Endothelial cell of umbilical vein (primary cell): ENCODE measurements at regions of chr1 and their contacts with region 1.

Region 1: DNA sequence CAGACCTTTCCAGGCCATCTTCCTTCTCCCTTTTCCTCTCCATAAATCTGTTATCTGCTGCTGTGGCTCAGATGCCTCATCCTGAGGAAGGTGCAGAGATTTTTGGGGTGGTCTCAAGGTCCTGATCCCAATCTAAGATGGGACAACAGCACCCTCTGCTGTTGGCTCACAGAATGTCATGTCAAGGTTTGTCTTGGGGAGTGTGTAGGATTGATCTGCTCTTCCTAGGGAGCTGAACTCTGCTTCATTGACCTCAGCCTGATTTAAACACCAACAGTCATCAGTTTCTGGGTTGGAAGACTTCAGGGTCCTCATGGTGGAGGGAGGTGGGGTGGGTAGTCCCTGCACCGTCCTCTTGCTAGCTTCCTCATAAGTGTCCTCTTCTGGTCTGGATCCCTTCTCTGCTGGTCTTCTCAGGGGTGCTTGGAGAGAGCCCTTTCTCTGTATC is 62.8 kb upstream of the LAX1 start:
- DNase-seq: peak; percentile 62
- H3K4me3 ChIP-seq: no peak overlapping the region
- H3K27ac ChIP-seq: no peak overlapping the region
- H3K4me1 ChIP-seq: no peaks in the 10 kb centered on the region
- H3K27me3 ChIP-seq: no peaks in the 10 kb centered on the region
- CTCF ChIP-seq: peak; percentile 71 to 82
- POLR2A ChIP-seq: no peak

Region 2: DNA sequence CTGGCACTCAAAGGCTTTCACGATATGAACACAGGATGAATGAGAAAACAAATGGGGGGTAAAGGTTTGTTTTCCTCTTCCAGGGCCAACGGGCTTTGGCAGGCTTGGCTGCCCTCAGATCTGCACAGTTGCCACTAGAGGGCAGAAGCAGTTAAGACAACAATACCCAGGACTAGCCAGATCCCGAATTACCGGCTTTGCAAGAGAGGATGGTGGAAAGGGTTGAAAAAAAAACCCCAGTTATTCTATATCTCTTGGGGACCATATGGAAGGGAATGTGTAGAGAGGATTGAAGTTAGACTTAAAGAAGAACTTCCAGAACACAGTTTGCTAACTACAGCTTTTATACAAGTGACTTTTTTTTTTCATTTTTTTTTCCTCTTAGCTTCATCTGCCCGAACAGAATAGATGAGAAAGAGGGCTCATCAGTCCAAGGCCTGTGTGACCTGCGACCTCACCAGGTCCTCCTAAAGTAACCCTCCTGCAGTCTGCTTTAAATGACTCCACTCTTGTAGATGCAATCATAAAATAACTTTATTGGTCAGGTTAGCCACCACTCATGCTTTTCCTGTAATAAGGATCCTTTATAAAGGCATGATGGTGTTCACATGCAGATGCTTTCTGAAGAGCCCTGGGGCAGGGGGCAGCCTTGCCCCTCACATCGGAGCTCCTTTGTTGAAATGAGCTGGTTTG is 361.9 kb before region 1 on chr1:
- CTCF ChIA-PET with region 1: interaction called, 27 read pairs
- POLR2A ChIA-PET with region 1: no interaction called
- dilution Hi-C with region 1: no loop called
- intact Hi-C with region 1: loop called (anchors 1 kb)
- DNase-seq: peak; percentile 76
- H3K4me3 ChIP-seq: no peak overlapping the region
- H3K27ac ChIP-seq: no peak overlapping the region
- H3K4me1 ChIP-seq: no peaks in the 10 kb centered on the region
- H3K27me3 ChIP-seq: peaks cover 33 to 42% of the 10 kb centered on the region in 2 experiments
- CTCF ChIP-seq: peak; percentile 82 to 89
- POLR2A ChIP-seq: no peak

Region 3: DNA sequence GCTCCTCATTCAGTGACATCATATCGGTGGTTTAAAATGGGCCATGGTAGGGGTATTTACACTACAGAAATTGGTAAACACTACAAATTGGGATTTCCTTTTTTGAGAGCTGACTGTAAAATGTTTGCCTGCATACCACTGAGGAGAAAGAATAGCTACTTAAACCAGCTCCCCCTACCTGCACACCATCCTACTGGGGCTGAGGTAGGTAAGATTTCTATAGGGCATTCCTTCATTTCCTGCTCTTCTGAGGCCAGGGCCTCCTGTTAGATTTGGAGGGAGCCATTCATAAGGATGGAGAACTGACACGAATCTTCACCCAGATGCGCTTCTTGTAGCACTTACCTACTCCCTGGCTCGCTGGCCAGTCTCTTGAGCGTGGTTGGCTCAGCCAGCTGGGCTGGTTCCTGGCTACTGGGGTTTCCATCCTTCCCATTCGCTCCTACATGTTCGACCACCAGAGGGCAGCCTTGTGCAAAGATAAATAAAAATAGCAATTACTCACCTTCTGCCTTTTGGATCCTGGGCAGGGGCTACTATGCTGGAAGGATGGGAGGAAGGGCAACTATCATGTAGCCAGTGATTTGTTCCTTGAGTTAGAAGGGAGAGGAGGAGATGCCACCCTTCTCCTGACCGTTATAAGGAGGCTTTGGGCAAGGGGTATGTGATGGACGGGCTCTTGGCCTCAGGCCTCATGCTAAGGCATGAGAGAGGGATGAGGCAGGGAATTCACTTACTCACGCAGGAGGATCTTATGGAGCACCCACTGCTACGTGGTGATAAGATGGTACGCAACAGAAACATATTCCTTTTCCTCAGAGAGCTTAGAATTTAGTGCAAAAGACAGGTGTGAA is 197.5 kb before region 1 on chr1:
- CTCF ChIA-PET with region 1: interaction called, 161 read pairs
- POLR2A ChIA-PET with region 1: interaction called, 3 read pairs
- dilution Hi-C with region 1: no loop called
- intact Hi-C with region 1: loop called (anchors 1 kb)
- DNase-seq: peak; percentile 73
- H3K4me3 ChIP-seq: no peak overlapping the region
- H3K27ac ChIP-seq: no peak overlapping the region
- H3K4me1 ChIP-seq: peaks cover 4% of the 10 kb centered on the region
- H3K27me3 ChIP-seq: peaks cover 0 to 3% of the 10 kb centered on the region in 2 experiments
- CTCF ChIP-seq: peak; percentile 70 to 75
- POLR2A ChIP-seq: no peak

Region 4: GRCh38 chr1:203593723-203594122 is 108.4 kb before region 1 on chr1:
- CTCF ChIA-PET with region 1: interaction called, 25 read pairs
- POLR2A ChIA-PET with region 1: no interaction called
- dilution Hi-C with region 1: no loop called
- intact Hi-C with region 1: loop called (anchors 5 kb)
- DNase-seq: no peak
- H3K4me3 ChIP-seq: no peak overlapping the region
- H3K27ac ChIP-seq: no peak overlapping the region
- H3K4me1 ChIP-seq: peaks cover 4% of the 10 kb centered on the region
- H3K27me3 ChIP-seq: peaks cover 0 to 4% of the 10 kb centered on the region in 2 experiments
- CTCF ChIP-seq: peak; percentile 10 to 13
- POLR2A ChIP-seq: no peak

Region 5: DNA sequence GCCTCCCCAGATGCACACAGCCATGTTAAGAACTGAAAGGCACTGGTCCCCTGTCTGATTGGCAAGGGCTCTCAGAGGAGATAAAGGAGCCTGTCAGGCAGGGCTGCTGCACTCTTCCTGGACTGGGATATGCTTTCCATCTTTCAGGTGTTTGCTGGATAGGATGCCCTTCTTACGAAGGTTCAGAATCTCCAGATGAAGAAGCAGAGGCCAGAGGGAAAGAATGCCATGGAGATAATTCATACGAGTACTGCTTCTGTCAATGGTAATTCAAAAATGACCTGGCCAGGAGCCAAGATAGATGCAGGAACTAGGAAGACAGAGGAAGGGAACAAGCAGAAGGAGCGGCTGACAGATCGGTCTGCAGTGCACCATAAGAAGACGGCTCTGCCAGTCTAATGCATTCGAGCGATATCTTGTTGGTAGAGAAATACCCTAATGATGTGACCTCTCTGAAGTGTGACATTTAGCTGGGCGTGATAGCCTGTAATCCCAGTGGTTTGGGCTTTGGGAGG is 92.1 kb before region 1 on chr1:
- CTCF ChIA-PET with region 1: interaction called, 33 read pairs
- POLR2A ChIA-PET with region 1: no interaction called
- dilution Hi-C with region 1: no loop called
- intact Hi-C with region 1: loop called (anchors 5 kb)
- DNase-seq: no peak
- H3K4me3 ChIP-seq: no peak overlapping the region
- H3K27ac ChIP-seq: no peak overlapping the region
- H3K4me1 ChIP-seq: peaks cover 15% of the 10 kb centered on the region
- H3K27me3 ChIP-seq: no peaks in the 10 kb centered on the region
- CTCF ChIP-seq: no peak
- POLR2A ChIP-seq: no peak

Region 6: GRCh38 chr1:203638950-203639349 is 63.2 kb before region 1 on chr1:
- CTCF ChIA-PET with region 1: interaction called, 18 read pairs
- POLR2A ChIA-PET with region 1: no interaction called
- dilution Hi-C with region 1: no loop called
- intact Hi-C with region 1: no loop called
- DNase-seq: peak; percentile 65
- H3K4me3 ChIP-seq: no peak overlapping the region
- H3K27ac ChIP-seq: no peak overlapping the region
- H3K4me1 ChIP-seq: peaks cover 27% of the 10 kb centered on the region
- H3K27me3 ChIP-seq: no peaks in the 10 kb centered on the region
- CTCF ChIP-seq: no peak
- POLR2A ChIP-seq: no peak

Region 7: DNA sequence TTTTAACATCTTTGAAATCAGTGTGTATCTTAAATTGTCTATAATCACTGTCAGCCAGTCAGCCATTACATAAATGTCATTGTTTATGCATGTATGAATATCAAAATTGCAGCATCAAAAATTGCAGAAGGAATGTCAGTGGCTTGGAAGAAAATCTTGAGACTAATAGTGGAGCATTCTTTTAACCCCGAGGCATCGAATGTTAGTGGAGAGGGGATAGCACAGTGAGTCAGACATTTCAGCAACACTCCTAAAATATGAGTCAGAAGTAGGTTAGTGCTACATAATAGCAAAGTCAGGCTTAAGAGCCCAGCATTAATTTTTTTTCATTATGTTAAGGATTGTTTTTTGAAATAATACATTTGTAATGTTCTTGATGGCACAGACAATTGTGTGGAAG is 204.8 kb after region 1 on chr1:
- CTCF ChIA-PET with region 1: no interaction called
- POLR2A ChIA-PET with region 1: no interaction called
- dilution Hi-C with region 1: no loop called
- intact Hi-C with region 1: no loop called
- DNase-seq: peak; percentile 62
- H3K4me3 ChIP-seq: no peak overlapping the region
- H3K27ac ChIP-seq: peak overlapping the region; percentile 33
- H3K4me1 ChIP-seq: peaks cover 9% of the 10 kb centered on the region
- H3K27me3 ChIP-seq: no peaks in the 10 kb centered on the region
- CTCF ChIP-seq: no peak
- POLR2A ChIP-seq: no peak

Region 8: GRCh38 chr1:205013683-205014367 is 1311.7 kb after region 1 on chr1:
- CTCF ChIA-PET with region 1: no interaction called
- POLR2A ChIA-PET with region 1: no interaction called
- dilution Hi-C with region 1: no loop called
- intact Hi-C with region 1: no loop called
- DNase-seq: no peak
- H3K4me3 ChIP-seq: no peak overlapping the region
- H3K27ac ChIP-seq: no peak overlapping the region
- H3K4me1 ChIP-seq: no peaks in the 10 kb centered on the region
- H3K27me3 ChIP-seq: peaks cover 0 to 3% of the 10 kb centered on the region in 2 experiments
- CTCF ChIP-seq: no peak
- POLR2A ChIP-seq: no peak